Sciatic nerve (tissue), 2 donors: ENCODE measurements at regions of chr4 and their contacts with region 1.

Region 1: GRCh38 chr4:75989846-75990528 is 758 bp downstream of the SDAD1 start:
- DNase-seq: no peak
- ATAC-seq: no peak

Region 2: GRCh38 chr4:75710246-75710645 is 279.7 kb before region 1 on chr4:
- intact Hi-C with region 1: loop called (anchors 2 kb)
- DNase-seq: no peak
- ATAC-seq: no peak